GM10248 (cell line): ENCODE measurements at regions of chr2 and their contacts with region 1.

Region 1: DNA sequence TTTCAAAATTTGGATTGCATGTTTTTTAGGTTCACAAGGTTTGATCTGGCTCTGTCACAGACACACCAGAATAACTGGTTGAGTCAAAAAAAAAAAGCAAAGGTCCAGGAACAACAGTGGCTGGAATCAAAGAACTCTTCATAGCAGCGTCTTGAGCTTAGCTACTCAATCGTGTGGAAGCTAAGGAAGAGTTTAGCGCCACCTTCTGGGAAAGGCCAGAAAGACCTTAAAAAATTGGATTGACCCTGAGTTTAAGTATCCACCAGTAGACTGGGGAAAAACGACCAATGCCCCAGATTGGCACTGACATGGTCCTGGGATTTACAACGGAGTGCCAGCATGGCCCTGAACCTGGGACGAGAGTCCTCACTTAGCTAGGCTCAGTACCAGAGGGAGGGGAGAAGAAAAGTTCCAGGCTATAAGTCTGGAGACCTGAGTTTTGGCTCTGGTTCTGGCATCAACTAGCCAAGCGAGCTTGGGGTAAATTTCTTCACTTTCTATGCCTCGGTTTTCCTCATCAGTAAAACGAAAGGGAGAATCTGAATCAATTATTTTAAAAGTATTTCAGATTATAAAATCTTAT is 71.1 kb upstream of the TFCP2L1 start:
- DNase-seq: peak; percentile 57
- CTCF ChIP-seq: peak; percentile 61

Region 2: GRCh38 chr2:121085801-121086200 is 270.3 kb before region 1 on chr2:
- CTCF ChIA-PET with region 1: interaction called, 13 read pairs
- POLR2A ChIA-PET with region 1: no interaction called
- DNase-seq: no peak
- CTCF ChIP-seq: no peak

Region 3: GRCh38 chr2:121345887-121346286 is 10.3 kb before region 1 on chr2:
- CTCF ChIA-PET with region 1: interaction called, 18 read pairs
- POLR2A ChIA-PET with region 1: no interaction called
- DNase-seq: no peak
- CTCF ChIP-seq: no peak

Region 4: GRCh38 chr2:121368836-121369235 is 12.7 kb after region 1 on chr2:
- CTCF ChIA-PET with region 1: interaction called, 36 read pairs
- POLR2A ChIA-PET with region 1: no interaction called
- DNase-seq: no peak
- CTCF ChIP-seq: no peak